AG04450 (cell line): ENCODE measurements at regions of chr10 and their contacts with region 1.

Region 1: GRCh38 chr10:80144067-80144695 is 11.7 kb downstream of the PLAC9 start:
- DNase-seq: no peak
- H3K4me3 ChIP-seq: no peak overlapping the region
- H3K27ac ChIP-seq: no peak overlapping the region
- H3K27me3 ChIP-seq: no peaks in the 10 kb centered on the region
- CTCF ChIP-seq: no peak

Region 2: GRCh38 chr10:80132299-80133139 is 11.7 kb before region 1 on chr10 and contains the start of gene PLAC9:
- CTCF ChIA-PET with region 1: interaction called, 10 read pairs
- POLR2A ChIA-PET with region 1: no interaction called
- DNase-seq: no peak
- H3K4me3 ChIP-seq: peak within 1 kb of the TSS; percentile 64
- H3K27ac ChIP-seq: no peak within 1 kb of the TSS
- H3K27me3 ChIP-seq: no peaks in the 10 kb centered on the region
- CTCF ChIP-seq: no peak
- polyA plus RNA-seq, gene PLAC9: 11.5 and 14.2 TPM in 2 replicates

Region 3: GRCh38 chr10:80154975-80155695 is 11.0 kb after region 1 on chr10:
- CTCF ChIA-PET with region 1: interaction called, 27 read pairs
- POLR2A ChIA-PET with region 1: no interaction called
- DNase-seq: peak; percentile 90
- H3K4me3 ChIP-seq: no peak overlapping the region; the same call in 1 of the 2 replicates
- H3K27ac ChIP-seq: peak overlapping the region; percentile 95
- H3K27me3 ChIP-seq: no peaks in the 10 kb centered on the region
- CTCF ChIP-seq: no peak